Breast epithelium (tissue), 4 donors: ENCODE measurements at regions of chr17 and their contacts with region 1.

Region 1: DNA sequence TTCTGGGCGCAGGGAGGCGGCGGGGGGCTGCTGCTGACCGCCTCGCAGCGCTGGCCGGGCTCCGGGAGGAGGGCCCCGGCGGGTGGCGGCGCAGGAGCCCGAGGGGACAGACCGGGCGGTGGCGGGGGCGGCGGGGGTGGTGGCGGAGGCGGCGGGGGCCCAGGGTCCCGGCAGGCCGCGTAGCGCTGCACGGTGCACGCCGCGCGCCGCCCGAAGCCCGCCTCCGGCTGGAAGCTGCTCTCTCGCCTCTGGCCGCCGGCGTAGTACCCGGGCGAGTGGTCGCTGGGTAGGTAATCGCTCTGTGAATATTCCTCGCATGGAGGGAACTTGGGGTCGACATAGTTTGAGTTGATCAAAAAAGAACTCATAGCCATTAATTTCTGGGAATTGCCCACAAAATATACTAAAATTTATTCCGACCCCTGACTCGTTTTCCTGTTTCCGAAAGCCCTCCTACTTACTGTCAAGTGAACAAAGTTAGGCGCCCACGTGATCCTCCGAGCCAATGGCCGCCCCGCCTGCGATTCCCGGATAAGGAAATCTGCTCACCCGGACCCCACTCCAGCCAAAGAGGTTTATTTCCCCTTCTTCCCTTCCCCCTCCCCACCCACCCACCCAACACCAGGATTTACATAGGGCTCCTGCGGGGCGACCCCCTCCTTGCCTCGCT is at the start of gene HOXB4:
- DNase-seq: peak in 1 of 2 donors; percentile 52
- H3K4me3 ChIP-seq: peak within 1 kb of the TSS; percentile 49 to 81 (median 57)
- H3K27ac ChIP-seq: peak within 1 kb of the TSS; percentile 73 to 94
- H3K4me1 ChIP-seq: peaks cover 0 to 7% of the 10 kb centered on the region in 2 donors
- H3K27me3 ChIP-seq: peaks cover 0 to 73% of the 10 kb centered on the region in 2 donors
- CTCF ChIP-seq: no peak
- POLR2A ChIP-seq: no peak
- total RNA-seq, gene HOXB4: 2.2 to 7.5 (median 2.3) TPM

Region 2: DNA sequence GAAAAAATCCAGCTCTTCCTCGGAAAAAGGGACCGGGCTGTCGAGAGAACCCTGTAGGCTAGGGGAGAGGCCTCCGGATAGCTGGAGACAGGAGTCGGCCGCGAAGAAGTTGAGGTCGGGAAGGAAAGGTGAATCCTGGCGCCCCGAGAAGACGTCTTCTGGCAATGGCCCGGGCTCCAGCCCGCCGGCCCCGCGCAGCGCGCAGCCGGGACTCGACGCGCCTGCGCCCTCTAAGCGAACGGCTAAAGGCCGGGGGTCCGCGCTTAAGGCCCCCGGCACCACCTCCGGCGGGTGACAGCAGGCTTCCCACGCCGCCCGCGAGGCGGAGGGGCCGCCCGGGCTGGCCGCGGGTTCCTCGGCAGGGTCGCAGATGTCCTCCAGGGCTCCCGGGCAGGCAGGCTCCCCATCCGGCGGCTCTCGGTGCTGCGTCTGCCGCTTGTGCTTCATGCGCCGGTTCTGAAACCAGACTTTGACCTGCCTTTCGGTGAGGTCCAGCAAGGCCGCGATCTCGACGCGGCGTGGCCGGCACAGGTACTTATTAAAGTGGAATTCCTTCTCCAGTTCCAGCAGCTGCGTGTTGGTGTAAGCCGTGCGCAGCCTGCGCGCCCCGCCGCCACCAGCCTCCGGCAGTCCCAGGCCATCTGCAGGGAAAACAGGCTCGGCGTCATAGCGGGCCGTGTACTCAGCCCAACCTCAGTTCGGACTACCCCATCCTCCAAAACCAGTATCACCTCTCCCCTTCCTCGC is 34.8 kb before region 1 on chr17:
- intact Hi-C with region 1: loop called (anchors 5 kb)
- DNase-seq: peak in 1 of 2 donors; percentile 63
- H3K4me3 ChIP-seq: peak overlapping the region; percentile 57 to 95 (median 60)
- H3K27ac ChIP-seq: peak overlapping the region; percentile 93 to 97
- H3K4me1 ChIP-seq: peaks cover 0 to 3% of the 10 kb centered on the region in 2 donors
- H3K27me3 ChIP-seq: peaks cover 0 to 14% of the 10 kb centered on the region in 2 donors
- CTCF ChIP-seq: peak; percentile 29 to 36 (median 34)
- POLR2A ChIP-seq: no peak

Region 3: DNA sequence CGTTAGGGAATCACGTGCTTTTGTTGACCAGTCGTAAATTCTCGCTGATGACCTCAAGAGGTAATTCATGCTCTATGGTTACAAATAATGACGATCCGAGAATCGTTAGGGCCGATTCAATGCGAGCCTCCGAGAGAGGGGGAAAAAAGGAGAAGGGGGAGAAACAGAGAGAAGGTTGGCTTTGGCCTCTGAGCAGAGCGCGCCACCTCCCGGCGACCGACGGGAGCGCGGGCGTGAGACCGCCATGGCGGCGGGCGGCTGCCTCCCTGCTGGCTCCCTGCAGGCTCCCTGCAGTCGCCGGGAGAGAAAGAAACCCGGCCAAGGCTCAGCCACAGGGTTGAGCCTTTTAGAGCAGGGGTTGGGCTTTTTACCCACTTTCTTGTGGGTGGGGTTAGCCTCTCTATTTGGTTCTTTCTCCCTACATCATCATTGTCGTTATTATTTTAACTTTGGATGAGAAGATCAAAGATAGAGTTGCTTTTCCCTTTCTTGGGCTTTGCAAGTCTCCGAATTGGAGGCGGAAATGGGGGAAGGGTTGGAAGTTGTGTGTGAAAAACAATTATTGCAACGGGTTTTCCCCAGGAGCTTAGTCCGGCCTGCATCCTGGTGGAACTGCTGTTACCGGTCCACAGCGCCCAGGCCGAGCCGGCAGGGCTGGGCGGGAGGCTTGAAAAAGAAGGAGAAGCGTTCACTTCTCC is 15.9 kb after region 1 on chr17:
- intact Hi-C with region 1: no loop called
- DNase-seq: peak in 1 of 2 donors; percentile 79
- H3K4me3 ChIP-seq: peak overlapping the region; percentile 41 to 68 (median 43)
- H3K27ac ChIP-seq: no peak overlapping the region
- H3K4me1 ChIP-seq: peaks cover 0 to 10% of the 10 kb centered on the region in 2 donors
- H3K27me3 ChIP-seq: peaks cover 0 to 82% of the 10 kb centered on the region in 2 donors
- CTCF ChIP-seq: peak; percentile 70 to 81 (median 73)
- POLR2A ChIP-seq: no peak